ENCODE measurements at regions of chr19 and their contacts with region 1.

Region 1: DNA sequence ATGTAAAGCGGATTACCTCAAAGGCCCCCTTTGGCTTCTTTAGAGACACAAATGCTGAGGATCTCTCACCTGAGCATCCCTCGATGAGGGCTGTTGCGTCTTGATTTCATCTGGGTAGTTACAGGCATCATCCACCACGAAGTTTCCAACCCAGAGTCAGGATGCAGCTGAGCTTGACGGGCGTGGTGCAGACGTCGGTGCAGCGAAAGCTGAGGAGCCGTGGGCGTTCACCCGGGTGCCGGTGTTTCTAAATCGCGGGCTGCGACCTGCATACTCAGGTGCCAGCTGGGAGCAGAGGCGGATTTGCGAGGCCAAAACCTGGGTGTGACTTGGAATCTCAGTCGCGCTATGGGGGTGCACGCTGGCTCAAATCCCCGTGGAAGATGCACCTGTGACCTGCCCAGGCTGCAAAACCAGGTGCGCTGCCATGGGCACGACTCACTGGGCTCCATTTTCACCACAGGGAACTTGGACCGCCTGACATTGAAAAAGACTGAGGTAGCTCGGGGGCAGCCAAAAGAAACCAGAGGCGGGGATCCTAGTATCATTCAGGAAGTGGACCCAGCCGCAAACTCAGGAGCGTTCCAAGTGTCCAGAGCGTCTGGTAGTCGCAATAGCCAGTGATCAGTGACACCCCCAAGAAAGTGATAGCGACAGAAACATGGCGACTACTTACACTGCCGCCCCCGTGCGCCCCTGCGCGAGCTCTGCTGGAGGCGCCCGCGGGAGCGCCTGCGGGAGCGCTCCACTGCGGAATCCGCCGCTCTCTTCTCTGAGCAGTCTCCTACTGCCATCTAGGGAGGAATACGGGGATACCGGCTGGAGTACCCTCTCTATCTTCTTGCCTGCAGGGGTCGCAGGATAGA is 36.4 kb upstream of the IGFL4 start:
- H3K4me3 Mint-ChIP-seq: peak overlapping the region; percentile 45
- H3K27ac Mint-ChIP-seq: no peak overlapping the region
- H3K4me1 Mint-ChIP-seq: peaks cover 22% of the 10 kb centered on the region
- H3K27me3 Mint-ChIP-seq: peaks cover 80% of the 10 kb centered on the region

Region 2: GRCh38 chr19:46189971-46190888 is 113.0 kb after region 1 on chr19:
- intact Hi-C with region 1: loop called (anchors 1 kb)
- H3K4me3 Mint-ChIP-seq: no peak overlapping the region
- H3K27ac Mint-ChIP-seq: no peak overlapping the region
- H3K4me1 Mint-ChIP-seq: peaks cover 38% of the 10 kb centered on the region
- H3K27me3 Mint-ChIP-seq: peaks cover 18% of the 10 kb centered on the region

Region 3: GRCh38 chr19:46265217-46265828 is 188.1 kb after region 1 on chr19:
- intact Hi-C with region 1: loop called (anchors 2 kb)
- H3K4me3 Mint-ChIP-seq: no peak overlapping the region
- H3K27ac Mint-ChIP-seq: no peak overlapping the region
- H3K4me1 Mint-ChIP-seq: peaks cover 7% of the 10 kb centered on the region
- H3K27me3 Mint-ChIP-seq: peaks cover 56% of the 10 kb centered on the region

Region 4: GRCh38 chr19:46728693-46729676 is 651.8 kb after region 1 on chr19:
- intact Hi-C with region 1: no loop called
- H3K4me3 Mint-ChIP-seq: no peak overlapping the region
- H3K27ac Mint-ChIP-seq: no peak overlapping the region
- H3K4me1 Mint-ChIP-seq: peaks cover 68% of the 10 kb centered on the region
- H3K27me3 Mint-ChIP-seq: no peaks in the 10 kb centered on the region

Measured in dendritic cell treated with granulocyte-macrophage colony-stimulating factor and Interleukin-4, amounts not matched to agents 40 ng/mL and 50 ng/mL, for 4 days (primary cell).